A549 (cell line): ENCODE measurements at regions of chr19 and their contacts with region 1.

Region 1: DNA sequence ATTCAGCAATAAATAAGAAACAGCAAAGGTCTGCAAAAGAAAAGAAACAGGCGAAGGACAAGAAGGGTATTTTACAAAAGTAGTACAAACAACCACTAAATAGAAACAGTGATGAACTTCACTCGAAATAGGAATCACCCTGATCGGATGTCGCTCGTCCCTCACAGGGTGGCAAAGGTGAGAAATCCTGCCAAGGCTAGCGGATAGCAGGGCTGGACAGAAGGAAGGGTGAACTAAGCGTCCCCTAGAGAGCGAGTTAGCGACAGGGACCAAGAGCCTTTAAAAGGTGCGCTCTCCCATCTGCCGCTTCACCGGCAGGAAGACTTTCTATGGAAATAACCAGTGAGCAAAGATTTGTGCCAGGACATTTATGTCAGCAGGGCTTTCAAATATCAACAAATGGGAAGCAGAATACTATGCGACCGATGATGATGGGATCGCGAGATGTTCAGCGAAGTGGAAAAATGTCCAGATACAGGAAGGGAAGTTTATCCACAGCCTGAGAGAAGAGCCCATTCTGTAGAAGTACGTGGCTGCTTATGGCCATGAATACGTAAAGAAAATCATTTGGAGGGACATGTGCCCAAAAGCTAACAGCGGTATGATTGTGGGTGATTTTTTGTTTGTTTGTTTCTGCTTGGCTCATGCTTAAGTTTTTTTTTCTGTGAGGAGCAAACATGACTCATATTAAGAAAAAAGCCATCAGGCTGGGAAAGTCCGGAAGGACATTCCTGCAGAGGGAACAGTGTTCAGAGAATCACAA is 18.9 kb downstream of the ELAVL1 start:
- DNase-seq: peak in 1 of 2 experiments; percentile 35
- ATAC-seq: peak; percentile 63 to 77; a peak in 5 of 6 replicates
- H3K4me3 ChIP-seq: no peak overlapping the region
- H3K27ac ChIP-seq: peak overlapping the region in 1 of 2 experiments; percentile 73; a peak in 3 of 6 replicates
- H3K4me1 ChIP-seq: peaks cover 38% of the 10 kb centered on the region
- CTCF ChIP-seq: no peak
- EP300 ChIP-seq: no peak
- POLR2A ChIP-seq: no peak
- RAD21 ChIP-seq: no peak

Region 2: GRCh38 chr19:7970716-7971448 is 15.6 kb before region 1 on chr19:
- CTCF ChIA-PET with region 1: interaction called, 31 read pairs
- POLR2A ChIA-PET with region 1: no interaction called
- DNase-seq: peak; percentile 37 to 39
- ATAC-seq: peak; percentile 86 to 87
- H3K4me3 ChIP-seq: no peak overlapping the region
- H3K27ac ChIP-seq: no peak overlapping the region
- H3K4me1 ChIP-seq: no peaks in the 10 kb centered on the region
- CTCF ChIP-seq: peak; percentile 65
- EP300 ChIP-seq: no peak
- POLR2A ChIP-seq: no peak
- RAD21 ChIP-seq: peak; percentile 67 to 74

Region 3: DNA sequence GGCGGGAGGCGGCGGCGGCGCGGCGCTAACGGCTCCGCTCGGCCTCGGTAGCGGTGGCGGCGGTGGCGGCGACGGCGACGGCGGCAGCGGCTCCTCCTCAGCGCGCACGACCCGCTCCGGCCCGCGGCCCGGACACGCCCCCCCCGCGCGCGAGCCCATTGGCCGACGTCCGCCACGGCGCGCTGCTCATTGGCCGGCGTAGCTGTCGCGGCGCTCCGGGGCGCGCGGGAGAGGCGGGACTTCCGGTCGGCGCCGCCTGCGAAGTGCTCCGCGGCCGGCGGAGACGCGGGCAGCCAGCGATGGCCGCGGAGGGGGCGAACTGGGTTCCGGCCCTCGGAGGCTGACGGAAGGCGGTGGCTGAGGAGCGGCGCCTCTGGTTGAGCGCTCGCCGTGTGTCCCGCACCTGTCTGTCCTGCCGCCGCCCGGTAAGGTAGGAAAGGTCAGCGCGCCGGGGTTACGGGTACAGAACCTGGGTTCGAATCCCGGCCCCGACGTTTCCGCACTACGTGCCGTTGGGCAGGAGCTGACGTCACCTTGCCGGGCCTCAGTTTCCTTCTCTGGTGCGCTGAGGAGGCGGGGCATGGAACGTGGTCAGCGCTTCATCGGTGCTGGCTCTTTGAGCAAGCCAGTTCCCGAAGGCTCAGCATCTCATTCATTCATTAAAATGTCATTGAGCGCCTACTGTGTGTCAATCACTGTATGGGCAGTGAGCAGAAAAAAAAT is 19.2 kb after region 1 on chr19 and contains the start of gene ELAVL1:
- CTCF ChIA-PET with region 1: interaction called, 34 read pairs
- POLR2A ChIA-PET with region 1: interaction called, 3 read pairs
- DNase-seq: peak; percentile 64 to 88
- ATAC-seq: peak; percentile 87 to 90
- H3K4me3 ChIP-seq: peak within 1 kb of the TSS; percentile 58
- H3K27ac ChIP-seq: peak within 1 kb of the TSS; percentile 89 to 99
- H3K4me1 ChIP-seq: peaks cover 19% of the 10 kb centered on the region
- CTCF ChIP-seq: no peak
- EP300 ChIP-seq: no peak
- POLR2A ChIP-seq: peak; percentile 81
- RAD21 ChIP-seq: no peak
- polyA plus RNA-seq, gene ELAVL1: 39.3 and 44.4 TPM in 2 replicates

Region 4: DNA sequence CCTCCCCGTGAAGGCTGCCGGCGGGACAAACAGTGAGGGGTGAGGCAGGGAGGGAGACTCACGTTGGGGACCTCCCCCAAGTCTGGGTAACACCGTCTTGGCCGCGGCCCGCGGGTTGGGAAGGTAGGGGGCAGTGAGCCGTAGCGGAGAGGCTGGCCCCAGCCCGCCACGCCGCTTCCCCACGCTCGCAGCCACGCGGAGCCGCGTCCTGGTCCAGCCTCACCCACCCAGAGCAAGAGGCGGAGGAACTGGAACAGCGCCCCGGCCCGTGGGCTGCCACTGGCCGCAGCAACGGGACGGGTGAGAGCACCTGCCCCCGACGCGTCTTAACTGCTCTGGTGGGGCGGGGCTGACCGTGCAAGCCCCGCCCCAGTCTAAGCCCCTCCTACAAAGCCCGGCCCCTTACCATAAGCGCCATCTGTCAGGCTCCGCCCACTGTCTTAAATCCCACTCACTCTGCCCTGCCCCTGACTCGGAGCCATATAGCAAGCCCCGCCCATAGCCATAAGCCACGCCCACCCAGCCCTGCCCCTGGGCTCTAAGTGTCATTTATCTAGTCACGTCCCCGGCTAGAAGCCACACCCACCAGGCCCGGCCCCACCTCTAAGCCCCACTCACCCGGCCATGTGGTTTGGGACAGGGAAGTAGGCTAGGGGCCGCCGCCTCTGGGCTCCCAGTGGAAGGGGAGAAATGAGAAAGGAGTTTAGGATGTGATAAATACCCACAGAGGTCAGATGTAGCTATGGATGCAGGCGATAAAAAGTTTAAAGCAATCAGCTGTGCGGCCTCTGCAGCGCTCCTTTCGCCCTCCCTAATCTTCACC is 64.0 kb after region 1 on chr19:
- CTCF ChIA-PET with region 1: no interaction called
- POLR2A ChIA-PET with region 1: no interaction called
- DNase-seq: peak; percentile 75 to 94
- ATAC-seq: peak; percentile 86 to 96
- H3K4me3 ChIP-seq: peak overlapping the region; percentile 48
- H3K27ac ChIP-seq: peak overlapping the region; percentile 49 to 62; a peak in 4 of 6 replicates
- H3K4me1 ChIP-seq: no peaks in the 10 kb centered on the region
- CTCF ChIP-seq: no peak
- EP300 ChIP-seq: no peak
- POLR2A ChIP-seq: no peak
- RAD21 ChIP-seq: no peak

Region 5: GRCh38 chr19:8307965-8308866 is 321.7 kb after region 1 on chr19 and contains the start of gene CD320:
- CTCF ChIA-PET with region 1: no interaction called
- POLR2A ChIA-PET with region 1: no interaction called
- DNase-seq: peak; percentile 88 to 90
- ATAC-seq: peak; percentile 91 to 92
- H3K4me3 ChIP-seq: peak within 1 kb of the TSS; percentile 53
- H3K27ac ChIP-seq: peak within 1 kb of the TSS; percentile 79 to 92
- H3K4me1 ChIP-seq: peaks cover 20% of the 10 kb centered on the region
- CTCF ChIP-seq: no peak
- EP300 ChIP-seq: no peak
- POLR2A ChIP-seq: peak; percentile 84
- RAD21 ChIP-seq: no peak
- polyA plus RNA-seq, gene CD320: 27.4 and 28.8 TPM in 2 replicates